Psoas muscle (tissue), 8 donors: ENCODE measurements at regions of chr9 and their contacts with region 1.

Region 1: GRCh38 chr9:89597711-89598625 is 6.8 kb upstream of the GADD45G start:
- DNase-seq: no peak
- ATAC-seq: peak; percentile 61 to 79 (median 68)
- H3K4me3 ChIP-seq: no peak overlapping the region
- H3K27ac ChIP-seq: no peak overlapping the region
- H3K4me1 ChIP-seq: no peaks in the 10 kb centered on the region
- H3K27me3 ChIP-seq: no peaks in the 10 kb centered on the region
- CTCF ChIP-seq: peak; percentile 87

Region 2: DNA sequence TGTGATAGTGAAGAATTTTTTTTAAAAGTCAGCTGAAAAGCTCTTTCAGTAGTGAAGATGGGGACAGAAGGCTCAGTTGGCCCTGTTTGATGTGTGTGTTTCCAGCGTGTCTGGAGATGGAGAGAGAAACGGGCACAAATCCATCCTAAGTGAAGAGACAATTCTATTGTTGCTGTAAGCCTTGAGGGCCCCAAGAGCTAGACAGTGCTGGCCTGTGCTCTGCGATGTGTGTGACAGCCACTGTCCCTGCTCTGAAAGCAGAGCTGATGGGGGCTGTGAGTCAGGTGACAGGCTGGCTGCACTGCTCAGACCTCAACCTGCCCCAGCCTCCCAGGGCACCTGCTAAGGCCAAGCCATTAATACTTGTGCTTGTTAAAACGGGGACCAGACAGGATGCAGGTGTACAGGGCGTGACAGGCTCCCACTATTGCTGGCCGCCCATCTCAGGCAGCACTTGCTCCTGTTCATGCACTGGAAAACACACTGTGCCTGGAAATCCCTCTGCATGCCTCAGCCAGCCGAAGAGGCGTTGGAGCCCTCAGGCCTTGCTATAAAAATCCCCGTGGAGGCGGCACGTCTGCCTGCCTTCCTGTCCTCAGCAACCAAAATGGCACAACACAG is 55.5 kb before region 1 on chr9:
- intact Hi-C with region 1: no loop called
- DNase-seq: no peak
- ATAC-seq: peak in 1 of 4 donors; percentile 29
- H3K4me3 ChIP-seq: no peak overlapping the region
- H3K27ac ChIP-seq: no peak overlapping the region
- H3K4me1 ChIP-seq: no peaks in the 10 kb centered on the region
- H3K27me3 ChIP-seq: no peaks in the 10 kb centered on the region
- CTCF ChIP-seq: no peak

Region 3: DNA sequence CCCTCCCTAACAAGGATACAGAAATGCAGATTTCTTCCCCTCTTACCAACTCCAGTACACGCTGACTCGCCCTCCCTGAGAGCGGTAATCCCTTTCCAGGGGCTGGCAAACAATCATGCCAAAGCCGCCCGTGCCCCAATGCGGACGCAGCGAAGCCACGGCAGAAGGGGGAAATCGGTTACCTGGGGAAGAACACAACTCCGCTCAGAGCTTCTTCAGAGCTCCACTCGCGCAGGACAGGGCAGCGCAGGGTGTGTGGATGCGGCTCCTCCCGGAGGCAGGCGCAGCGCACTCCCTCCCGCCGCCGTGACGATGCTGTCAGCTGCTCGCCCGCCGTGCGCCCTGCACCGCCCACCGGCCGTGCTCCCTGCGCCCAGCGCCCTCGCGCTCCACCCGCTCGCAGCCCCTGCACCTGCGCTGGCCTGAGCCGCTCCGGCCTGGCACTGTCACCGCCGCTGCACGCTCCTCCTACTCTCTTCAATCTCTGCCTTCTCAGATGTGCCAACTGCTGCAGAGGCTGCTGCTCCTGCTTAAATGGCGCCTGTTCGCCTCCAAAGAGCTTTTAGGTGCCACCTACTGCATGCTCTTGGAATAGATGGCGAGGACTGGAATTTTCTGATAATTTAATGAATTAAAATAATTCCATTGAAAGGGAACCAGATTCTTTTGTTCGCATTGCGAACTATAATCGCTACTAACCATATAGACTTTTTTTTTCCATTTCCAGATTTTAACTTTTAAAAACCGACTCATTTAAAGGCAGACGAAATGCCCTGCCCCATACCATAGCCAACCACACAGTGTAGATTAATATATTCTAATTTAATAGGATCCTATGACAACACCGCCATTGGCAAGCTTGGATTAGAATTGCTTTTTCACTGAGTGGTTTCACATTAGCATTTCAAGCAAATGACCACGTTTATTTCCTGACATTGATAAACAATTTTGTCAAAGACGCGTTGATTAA is 1044.9 kb after region 1 on chr9 and contains the start of gene DIRAS2:
- intact Hi-C with region 1: loop called in 1 of 2 experiments (anchors 10 kb)
- DNase-seq: peak; percentile 24 to 55
- ATAC-seq: peak; percentile 78 to 85 (median 82)
- H3K4me3 ChIP-seq: peak within 1 kb of the TSS; percentile 65
- H3K27ac ChIP-seq: no peak within 1 kb of the TSS
- H3K4me1 ChIP-seq: peaks cover 3% of the 10 kb centered on the region
- H3K27me3 ChIP-seq: peaks cover 0 to 29% (median 0%) of the 10 kb centered on the region in 3 donors
- CTCF ChIP-seq: peak; percentile 31
- total RNA-seq, gene DIRAS2: 0.05 TPM in 1 of 4 donors, not detected in the others

Region 4: DNA sequence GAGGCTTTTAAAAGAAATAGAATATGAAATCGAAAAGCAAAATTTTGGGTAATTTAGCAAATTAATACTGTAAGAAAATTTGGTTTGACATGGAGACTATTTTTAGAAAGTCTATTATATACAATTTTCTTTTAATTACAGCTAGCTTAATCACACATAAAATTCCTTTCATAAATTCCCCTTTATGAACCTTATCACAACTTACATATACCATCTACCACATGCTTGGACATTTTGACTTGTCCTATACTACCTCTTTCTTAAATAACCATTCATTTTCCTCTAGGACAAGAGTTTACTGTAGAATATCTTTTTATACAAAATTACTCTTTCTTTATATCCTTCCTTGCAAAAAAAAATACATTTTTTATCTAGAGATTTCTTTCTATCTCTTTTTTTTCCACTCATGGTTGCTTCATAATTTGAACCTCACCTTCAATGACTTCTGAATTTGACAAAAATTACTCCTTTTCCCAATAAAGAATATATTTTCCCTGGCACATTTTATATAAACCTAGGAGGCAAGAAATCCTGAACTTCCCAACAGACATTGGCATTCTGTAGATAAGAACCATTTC is 1169.6 kb after region 1 on chr9:
- intact Hi-C with region 1: loop called in 1 of 2 experiments (anchors 10 kb)
- DNase-seq: no peak
- ATAC-seq: no peak
- H3K4me3 ChIP-seq: no peak overlapping the region
- H3K27ac ChIP-seq: no peak overlapping the region
- H3K4me1 ChIP-seq: no peaks in the 10 kb centered on the region
- H3K27me3 ChIP-seq: peaks cover 0 to 3% (median 1%) of the 10 kb centered on the region in 3 donors
- CTCF ChIP-seq: no peak

Region 5: GRCh38 chr9:90870621-90871326 is 1272.8 kb after region 1 on chr9:
- intact Hi-C with region 1: loop called (anchors 5 kb)
- DNase-seq: no peak
- ATAC-seq: peak in 3 of 4 donors; percentile 51 to 58 (median 58)
- H3K4me3 ChIP-seq: no peak overlapping the region
- H3K27ac ChIP-seq: no peak overlapping the region
- H3K4me1 ChIP-seq: peaks cover 9% of the 10 kb centered on the region
- H3K27me3 ChIP-seq: no peaks in the 10 kb centered on the region
- CTCF ChIP-seq: peak; percentile 91